ENCODE measurements at regions of chr12 and their contacts with region 1.

Region 1: DNA sequence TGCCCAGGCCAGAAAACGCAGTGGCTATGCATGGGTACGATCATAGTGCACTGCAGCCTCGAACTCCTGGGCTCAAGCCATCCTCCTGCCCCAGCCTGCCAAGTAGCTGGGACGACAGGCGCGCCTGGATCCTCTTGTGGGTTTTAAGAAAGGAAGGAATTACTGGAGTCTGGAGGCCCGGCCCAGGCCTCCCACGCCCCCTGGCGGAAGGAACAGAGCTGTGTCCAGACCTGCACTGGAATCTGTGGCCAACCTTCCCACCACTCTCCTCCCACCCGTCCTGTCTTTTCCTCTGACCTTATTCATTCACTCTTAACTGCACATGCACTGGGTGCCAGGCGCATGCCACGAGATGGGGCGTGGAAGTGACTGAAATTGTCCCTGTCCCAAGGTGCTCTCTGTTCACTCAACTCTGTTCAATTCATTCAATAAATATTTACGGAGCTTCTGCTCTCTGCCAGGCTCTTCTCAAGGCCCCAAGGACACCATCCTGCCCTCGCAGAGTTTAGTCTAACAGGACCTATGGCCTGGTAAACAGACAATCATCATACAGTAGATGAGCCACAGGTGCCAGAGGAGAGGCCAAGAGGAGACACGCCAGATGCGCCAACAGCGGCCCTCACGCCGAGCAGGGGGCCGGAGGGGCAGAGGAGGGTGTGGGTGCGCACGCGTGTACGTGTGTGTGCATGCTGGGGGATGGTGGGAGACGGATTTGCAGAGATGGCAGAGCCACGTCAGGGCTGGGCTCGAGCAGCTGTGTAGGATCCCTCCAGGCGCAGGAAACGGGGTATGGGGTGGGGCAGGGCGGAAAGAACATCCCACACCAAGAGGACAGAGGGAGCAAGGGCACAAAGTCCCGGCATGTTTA is 13.7 kb upstream of the TMEM106C start:
- DNase-seq: peak; percentile 72
- H3K4me3 Mint-ChIP-seq: no peak overlapping the region
- H3K27ac Mint-ChIP-seq: no peak overlapping the region
- H3K4me1 Mint-ChIP-seq: peaks cover 4% of the 10 kb centered on the region
- H3K27me3 Mint-ChIP-seq: no peaks in the 10 kb centered on the region

Region 2: GRCh38 chr12:47904713-47905310 is 44.9 kb before region 1 on chr12 and contains the start of gene VDR:
- CTCF ChIA-PET with region 1: interaction called, 25 read pairs
- intact Hi-C with region 1: loop called (anchors 1 kb)
- DNase-seq: peak; percentile 81
- H3K4me3 Mint-ChIP-seq: peak within 1 kb of the TSS; percentile 98
- H3K27ac Mint-ChIP-seq: peak within 1 kb of the TSS; percentile 93
- H3K4me1 Mint-ChIP-seq: peaks cover 42% of the 10 kb centered on the region
- H3K27me3 Mint-ChIP-seq: peaks cover 19% of the 10 kb centered on the region
- total RNA-seq, gene VDR: 56.4 to 57.7 TPM